Colonic mucosa (tissue), 4 donors: ENCODE measurements at regions of chr21 and their contacts with region 1.

Region 1: DNA sequence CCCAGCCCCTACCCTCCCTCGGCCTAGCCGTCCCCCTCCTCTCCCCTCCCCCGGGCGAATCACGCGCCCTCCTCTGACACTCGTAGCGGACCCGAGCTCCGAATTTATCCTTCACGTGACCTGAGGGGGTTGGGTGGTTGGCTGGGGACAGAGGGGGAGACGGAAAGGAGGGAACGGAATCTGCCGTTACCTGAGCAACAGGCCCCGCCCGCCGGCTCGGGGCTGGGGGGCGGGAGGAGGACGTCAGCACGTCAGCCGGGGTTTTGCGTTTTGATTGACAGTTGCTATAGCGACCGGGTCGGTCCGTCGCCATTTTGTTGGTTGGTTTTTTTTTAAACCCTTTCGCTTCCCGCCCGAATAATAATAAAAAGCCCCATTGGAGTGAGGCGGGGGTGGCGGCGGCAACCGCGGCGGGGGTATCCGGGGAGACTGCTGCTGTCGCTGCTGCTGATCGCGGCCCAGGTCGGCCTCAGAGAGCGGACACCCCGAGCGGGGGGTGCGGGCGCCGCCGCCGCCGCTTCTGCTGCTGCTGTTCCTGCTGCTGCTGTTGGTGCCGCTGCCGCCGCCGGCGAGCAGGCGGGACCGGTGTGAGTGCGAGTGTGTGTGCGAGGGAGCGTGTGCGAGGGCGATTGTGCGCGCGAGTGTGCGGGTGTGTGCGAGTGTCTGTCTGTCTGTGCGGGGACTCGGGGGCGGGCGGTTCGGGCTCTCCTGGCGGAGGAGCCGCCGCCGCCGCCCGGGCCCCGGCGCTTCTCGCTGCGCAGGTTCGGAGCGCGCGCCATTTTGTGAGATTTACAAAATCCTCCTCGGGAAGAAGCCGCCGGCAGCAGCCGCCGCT is at the start of gene DYRK1A:
- DNase-seq: peak; percentile 100
- H3K4me3 ChIP-seq: peak within 1 kb of the TSS; percentile 78
- H3K27ac ChIP-seq: peak within 1 kb of the TSS; percentile 100
- H3K4me1 ChIP-seq: peaks cover 14% of the 10 kb centered on the region
- H3K27me3 ChIP-seq: no peaks in the 10 kb centered on the region
- CTCF ChIP-seq: no peak
- total RNA-seq, gene DYRK1A: 57.5 to 57.7 TPM

Region 2: DNA sequence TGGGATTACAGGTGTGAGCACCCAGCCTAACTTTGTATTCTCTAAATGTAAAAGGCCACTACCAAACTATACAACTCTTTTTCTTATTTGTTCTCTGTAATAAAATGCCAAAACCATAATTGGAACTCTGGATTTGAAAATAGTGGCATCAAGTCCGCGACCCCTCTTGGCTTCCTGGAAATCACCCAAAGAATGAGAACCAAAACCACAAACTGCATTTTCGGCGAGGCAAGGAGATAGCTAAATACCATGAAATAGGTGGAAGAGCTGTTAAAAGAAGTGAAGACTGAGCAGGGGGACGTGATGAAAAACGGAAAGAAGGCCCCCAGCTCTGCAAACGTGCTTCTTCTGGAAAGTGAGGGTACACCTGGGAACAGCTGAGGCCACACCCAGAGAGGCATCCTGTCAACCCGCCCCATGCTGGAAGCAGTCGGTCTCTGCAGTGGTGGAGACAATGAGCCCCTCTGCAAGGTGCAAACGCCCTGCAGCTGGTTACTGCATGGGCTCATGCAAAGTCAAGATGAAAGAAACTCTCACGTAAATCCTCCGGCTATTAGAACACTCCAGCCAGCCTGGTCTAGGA is 122.1 kb before region 1 on chr21:
- intact Hi-C with region 1: no loop called
- DNase-seq: no peak
- H3K4me3 ChIP-seq: no peak overlapping the region
- H3K27ac ChIP-seq: no peak overlapping the region
- H3K4me1 ChIP-seq: no peaks in the 10 kb centered on the region
- H3K27me3 ChIP-seq: no peaks in the 10 kb centered on the region
- CTCF ChIP-seq: no peak

Region 3: GRCh38 chr21:37267269-37268184 is 99.2 kb before region 1 on chr21 and contains the start of gene VPS26C:
- intact Hi-C with region 1: loop called (anchors 2 kb)
- DNase-seq: peak; percentile 99
- H3K4me3 ChIP-seq: peak within 1 kb of the TSS; percentile 81
- H3K27ac ChIP-seq: peak within 1 kb of the TSS; percentile 89
- H3K4me1 ChIP-seq: peaks cover 8% of the 10 kb centered on the region
- H3K27me3 ChIP-seq: no peaks in the 10 kb centered on the region
- CTCF ChIP-seq: no peak
- total RNA-seq, gene VPS26C: 48.1 to 60.7 TPM

Region 4: DNA sequence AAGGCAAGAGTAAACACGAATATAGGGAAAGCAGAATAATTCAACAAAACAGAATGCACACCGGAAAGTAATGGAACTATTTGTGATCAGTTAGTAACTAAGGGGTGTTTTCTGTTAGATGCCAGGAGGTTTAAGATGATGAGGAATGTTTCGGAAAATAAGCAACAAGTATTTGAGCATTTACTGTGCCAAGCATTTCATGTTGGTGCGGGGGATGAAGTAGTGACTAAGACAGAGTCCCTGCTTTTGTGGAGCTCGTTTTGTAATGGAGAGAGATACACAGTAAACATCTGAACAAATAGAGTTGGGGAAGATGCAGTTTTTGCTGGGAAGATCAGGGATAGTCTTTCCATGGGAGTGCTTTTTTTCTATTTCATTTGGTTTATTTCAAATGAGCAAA is 78.5 kb after region 1 on chr21:
- intact Hi-C with region 1: loop called (anchors 10 kb)
- DNase-seq: no peak
- H3K4me3 ChIP-seq: no peak overlapping the region
- H3K27ac ChIP-seq: no peak overlapping the region
- H3K4me1 ChIP-seq: peaks cover 11% of the 10 kb centered on the region
- H3K27me3 ChIP-seq: no peaks in the 10 kb centered on the region
- CTCF ChIP-seq: no peak